Caco-2 (cell line): ENCODE measurements at regions of chr14 and their contacts with region 1.

Region 1: GRCh38 chr14:34496679-34497513 is 34.9 kb upstream of the SPTSSA start:
- DNase-seq: peak; percentile 72 to 81
- H3K4me3 ChIP-seq: no peak overlapping the region
- H3K4me3 Mint-ChIP-seq: peak overlapping the region; percentile 61
- H3K27ac Mint-ChIP-seq: peak overlapping the region; percentile 91
- H3K4me1 ChIP-seq: peaks cover 23% of the 10 kb centered on the region
- H3K4me1 Mint-ChIP-seq: no peaks in the 10 kb centered on the region
- H3K27me3 ChIP-seq: no peaks in the 10 kb centered on the region
- H3K27me3 Mint-ChIP-seq: no peaks in the 10 kb centered on the region
- CTCF ChIP-seq: peak; percentile 23 to 46

Region 2: DNA sequence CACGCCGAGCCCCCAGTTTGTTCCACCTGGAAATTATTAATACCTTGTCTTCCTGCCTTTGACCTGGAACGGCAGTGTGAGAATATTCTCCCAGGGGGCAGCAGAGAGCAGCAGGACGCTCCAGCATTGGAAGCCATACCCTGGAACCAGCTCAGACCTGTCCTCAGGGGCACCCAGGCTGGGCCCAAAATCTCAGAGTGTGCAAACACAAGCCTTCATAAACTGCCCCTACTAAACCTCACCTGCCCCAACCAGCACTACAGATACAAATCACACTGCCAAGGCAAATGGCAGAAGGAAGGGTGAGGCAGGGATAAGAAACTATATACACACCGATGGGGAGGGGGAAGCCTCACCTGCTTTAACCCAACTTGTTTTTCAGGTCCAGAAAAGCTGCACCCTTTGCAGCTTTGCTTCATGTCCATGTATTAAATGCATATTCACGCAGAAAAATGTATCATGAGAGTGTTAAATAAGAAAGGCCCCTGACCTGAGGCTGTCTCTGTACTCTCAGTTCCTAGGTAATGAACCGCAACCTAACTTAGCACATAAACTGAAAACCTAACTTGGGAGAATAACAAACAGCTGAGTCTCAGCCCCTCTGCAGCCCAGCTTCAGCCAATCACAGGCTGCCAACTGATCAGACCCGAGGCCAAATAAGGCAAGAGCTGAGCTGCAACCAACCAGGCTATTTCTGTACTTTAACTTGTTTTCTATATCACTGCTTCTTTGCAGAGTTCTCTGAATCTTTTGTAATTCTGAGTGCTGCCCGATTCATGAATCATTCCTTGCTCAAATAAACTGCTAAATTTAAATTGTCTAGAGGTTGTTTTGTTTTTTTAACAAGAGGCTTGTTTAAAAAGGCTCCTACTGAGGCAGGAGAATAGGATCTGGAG is 164.9 kb before region 1 on chr14:
- CTCF ChIA-PET with region 1: interaction called, 6 read pairs
- POLR2A ChIA-PET with region 1: no interaction called
- intact Hi-C with region 1: loop called (anchors 1 kb)
- DNase-seq: peak; percentile 73 to 77
- H3K4me3 ChIP-seq: no peak overlapping the region
- H3K4me3 Mint-ChIP-seq: no peak overlapping the region
- H3K27ac Mint-ChIP-seq: no peak overlapping the region
- H3K4me1 ChIP-seq: peaks cover 28% of the 10 kb centered on the region
- H3K4me1 Mint-ChIP-seq: peaks cover 16% of the 10 kb centered on the region
- H3K27me3 ChIP-seq: no peaks in the 10 kb centered on the region
- H3K27me3 Mint-ChIP-seq: no peaks in the 10 kb centered on the region
- CTCF ChIP-seq: peak; percentile 61 to 65

Region 3: DNA sequence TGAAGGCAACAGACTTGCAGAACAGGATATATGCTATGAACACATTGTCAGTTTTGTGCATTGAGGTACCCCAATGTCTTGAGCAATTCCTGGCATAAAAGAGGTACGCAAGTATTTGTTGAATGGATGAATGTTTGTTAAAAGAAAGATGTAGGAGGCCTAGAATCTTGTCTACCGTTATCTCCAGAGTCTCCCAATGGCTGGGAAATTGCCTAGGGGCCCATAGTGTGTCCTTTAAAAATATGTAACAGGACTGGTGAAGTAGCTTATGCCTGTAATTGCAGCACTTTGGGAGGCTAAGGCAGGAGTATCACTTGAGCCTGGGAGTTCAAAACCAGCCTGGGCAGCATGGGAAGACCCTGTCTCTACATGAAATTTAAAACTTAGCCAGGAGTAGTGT is 14.4 kb before region 1 on chr14:
- CTCF ChIA-PET with region 1: no interaction called
- POLR2A ChIA-PET with region 1: no interaction called
- intact Hi-C with region 1: no loop called
- DNase-seq: no peak
- H3K4me3 ChIP-seq: no peak overlapping the region
- H3K4me3 Mint-ChIP-seq: no peak overlapping the region
- H3K27ac Mint-ChIP-seq: no peak overlapping the region
- H3K4me1 ChIP-seq: no peaks in the 10 kb centered on the region
- H3K4me1 Mint-ChIP-seq: no peaks in the 10 kb centered on the region
- H3K27me3 ChIP-seq: no peaks in the 10 kb centered on the region
- H3K27me3 Mint-ChIP-seq: no peaks in the 10 kb centered on the region
- CTCF ChIP-seq: no peak